ENCODE measurements at regions of chr5 and their contacts with region 1.

Region 1: GRCh38 chr5:10863763-10864383 is 102.8 kb upstream of the DAP start:
- DNase-seq: peak; percentile 68
- H3K4me3 Mint-ChIP-seq: no peak overlapping the region
- H3K27ac Mint-ChIP-seq: no peak overlapping the region
- H3K4me1 Mint-ChIP-seq: no peaks in the 10 kb centered on the region
- H3K27me3 Mint-ChIP-seq: peaks cover 56% of the 10 kb centered on the region
- CTCF ChIP-seq: peak; percentile 80

Region 2: DNA sequence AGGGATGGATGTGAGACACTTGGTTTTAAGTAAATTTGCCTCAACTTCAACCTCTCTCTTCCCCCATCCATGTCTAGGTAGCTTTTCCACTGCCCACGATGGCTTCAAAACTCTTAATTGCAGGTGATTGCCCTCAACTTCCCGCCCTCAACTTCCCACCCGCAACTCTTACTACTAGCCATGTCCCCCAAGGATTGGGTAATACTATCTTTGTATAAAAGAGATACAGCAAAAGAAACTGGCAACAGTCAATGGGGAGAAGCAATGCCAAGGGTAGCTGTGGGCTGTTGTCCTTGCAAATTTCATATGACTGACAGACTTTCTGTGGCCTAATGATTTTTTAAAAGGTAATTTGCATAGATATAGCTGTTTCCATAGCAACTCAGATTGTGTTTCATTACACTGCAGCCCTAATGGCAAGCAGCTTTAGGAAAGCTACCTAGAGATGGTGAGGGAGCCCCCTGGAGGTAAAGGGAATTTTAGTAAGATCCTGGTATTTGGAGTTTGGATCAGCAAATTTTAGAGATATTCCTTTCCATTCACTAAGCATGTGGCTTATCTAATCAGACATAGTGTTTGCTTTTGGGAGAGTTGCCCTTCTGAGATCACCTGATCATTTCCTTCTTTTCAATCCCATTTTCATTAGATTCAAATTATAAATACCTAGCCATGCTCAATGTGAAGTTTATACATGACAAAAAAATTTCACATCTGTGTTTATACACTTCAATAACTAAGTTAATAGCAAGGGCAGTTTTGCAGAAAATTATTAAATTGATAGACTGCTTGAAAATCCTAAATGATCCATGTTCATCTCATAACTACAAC is 318.8 kb after region 1 on chr5:
- CTCF ChIA-PET with region 1: interaction called, 3 read pairs
- POLR2A ChIA-PET with region 1: no interaction called
- intact Hi-C with region 1: loop called (anchors 2 kb)
- DNase-seq: peak; percentile 50
- H3K4me3 Mint-ChIP-seq: no peak overlapping the region
- H3K27ac Mint-ChIP-seq: no peak overlapping the region
- H3K4me1 Mint-ChIP-seq: no peaks in the 10 kb centered on the region
- H3K27me3 Mint-ChIP-seq: no peaks in the 10 kb centered on the region
- CTCF ChIP-seq: peak; percentile 47

Region 3: DNA sequence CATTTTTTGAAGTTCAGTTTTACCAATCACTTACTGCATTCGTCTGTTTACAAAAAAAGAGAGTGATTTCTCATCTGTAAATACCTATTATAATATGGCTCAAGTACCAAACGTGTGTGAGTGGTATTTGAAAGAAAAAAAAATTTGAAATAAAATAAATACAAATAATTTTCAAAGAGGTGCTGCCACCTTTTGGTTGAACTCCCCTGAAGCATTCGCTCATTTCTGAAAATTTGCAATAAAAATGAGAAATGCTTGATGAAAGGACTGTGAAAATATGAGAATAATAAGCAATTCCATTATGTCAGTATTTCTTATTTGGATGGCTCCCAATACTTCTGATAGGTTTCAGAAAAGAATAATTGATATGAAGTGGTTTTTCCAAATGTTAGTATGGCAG is 630.5 kb after region 1 on chr5:
- CTCF ChIA-PET with region 1: interaction called, 5 read pairs
- POLR2A ChIA-PET with region 1: no interaction called
- intact Hi-C with region 1: loop called (anchors 10 kb)
- DNase-seq: no peak
- H3K4me3 Mint-ChIP-seq: no peak overlapping the region
- H3K27ac Mint-ChIP-seq: no peak overlapping the region
- H3K4me1 Mint-ChIP-seq: no peaks in the 10 kb centered on the region
- H3K27me3 Mint-ChIP-seq: peaks cover 20% of the 10 kb centered on the region
- CTCF ChIP-seq: peak; percentile 46